CD4-positive, alpha-beta T cell (primary cell): ENCODE measurements at regions of chr3 and their contacts with region 1.

Region 1: GRCh38 chr3:51995346-51996163 is at the start of gene RPL29:
- DNase-seq: peak; percentile 87 to 97 (median 91)
- ATAC-seq: peak; percentile 98
- H3K4me3 ChIP-seq: peak within 1 kb of the TSS; percentile 88
- H3K4me3 Mint-ChIP-seq: peak within 1 kb of the TSS; percentile 99
- H3K27ac ChIP-seq: peak within 1 kb of the TSS; percentile 88 to 95
- H3K27ac Mint-ChIP-seq: peak within 1 kb of the TSS; percentile 97
- H3K4me1 ChIP-seq: peaks cover 40% of the 10 kb centered on the region
- H3K4me1 Mint-ChIP-seq: peaks cover 31% of the 10 kb centered on the region
- H3K27me3 ChIP-seq: no peaks in the 10 kb centered on the region
- H3K27me3 Mint-ChIP-seq: no peaks in the 10 kb centered on the region
- CTCF ChIP-seq: no peak
- total RNA-seq, gene RPL29: 1,843 to 1,901 TPM

Region 2: GRCh38 chr3:51974963-51975851 is 20.3 kb before region 1 on chr3 and contains the start of gene ABHD14A:
- CTCF ChIA-PET with region 1: interaction called, 22 read pairs
- POLR2A ChIA-PET with region 1: interaction called, 28 read pairs
- intact Hi-C with region 1: loop called in 1 of 2 experiments (anchors 1 kb)
- DNase-seq: peak; percentile 48 to 92 (median 67)
- ATAC-seq: peak; percentile 67
- H3K4me3 ChIP-seq: peak within 1 kb of the TSS; percentile 63
- H3K4me3 Mint-ChIP-seq: peak within 1 kb of the TSS; percentile 97
- H3K27ac ChIP-seq: peak within 1 kb of the TSS; percentile 57 to 79
- H3K27ac Mint-ChIP-seq: peak within 1 kb of the TSS; percentile 92
- H3K4me1 ChIP-seq: peaks cover 61% of the 10 kb centered on the region
- H3K4me1 Mint-ChIP-seq: peaks cover 44% of the 10 kb centered on the region
- H3K27me3 ChIP-seq: no peaks in the 10 kb centered on the region
- H3K27me3 Mint-ChIP-seq: no peaks in the 10 kb centered on the region
- CTCF ChIP-seq: no peak
- total RNA-seq, gene ABHD14A: 9.5 to 10.6 TPM

Region 3: GRCh38 chr3:51982782-51983577 is 12.6 kb before region 1 on chr3 and contains the start of gene ACY1:
- CTCF ChIA-PET with region 1: interaction called, 13 read pairs
- POLR2A ChIA-PET with region 1: interaction called, 32 read pairs
- intact Hi-C with region 1: no loop called
- DNase-seq: peak in 13 of 14 experiments; percentile 36 to 85 (median 56)
- ATAC-seq: peak; percentile 85
- H3K4me3 ChIP-seq: peak within 1 kb of the TSS; percentile 75
- H3K4me3 Mint-ChIP-seq: peak within 1 kb of the TSS; percentile 93
- H3K27ac ChIP-seq: peak within 1 kb of the TSS; percentile 69 to 85
- H3K27ac Mint-ChIP-seq: peak within 1 kb of the TSS; percentile 81
- H3K4me1 ChIP-seq: peaks cover 42% of the 10 kb centered on the region
- H3K4me1 Mint-ChIP-seq: peaks cover 20% of the 10 kb centered on the region
- H3K27me3 ChIP-seq: no peaks in the 10 kb centered on the region
- H3K27me3 Mint-ChIP-seq: no peaks in the 10 kb centered on the region
- CTCF ChIP-seq: peak; percentile 3
- total RNA-seq, gene ACY1: 4.9 TPM

Region 4: DNA sequence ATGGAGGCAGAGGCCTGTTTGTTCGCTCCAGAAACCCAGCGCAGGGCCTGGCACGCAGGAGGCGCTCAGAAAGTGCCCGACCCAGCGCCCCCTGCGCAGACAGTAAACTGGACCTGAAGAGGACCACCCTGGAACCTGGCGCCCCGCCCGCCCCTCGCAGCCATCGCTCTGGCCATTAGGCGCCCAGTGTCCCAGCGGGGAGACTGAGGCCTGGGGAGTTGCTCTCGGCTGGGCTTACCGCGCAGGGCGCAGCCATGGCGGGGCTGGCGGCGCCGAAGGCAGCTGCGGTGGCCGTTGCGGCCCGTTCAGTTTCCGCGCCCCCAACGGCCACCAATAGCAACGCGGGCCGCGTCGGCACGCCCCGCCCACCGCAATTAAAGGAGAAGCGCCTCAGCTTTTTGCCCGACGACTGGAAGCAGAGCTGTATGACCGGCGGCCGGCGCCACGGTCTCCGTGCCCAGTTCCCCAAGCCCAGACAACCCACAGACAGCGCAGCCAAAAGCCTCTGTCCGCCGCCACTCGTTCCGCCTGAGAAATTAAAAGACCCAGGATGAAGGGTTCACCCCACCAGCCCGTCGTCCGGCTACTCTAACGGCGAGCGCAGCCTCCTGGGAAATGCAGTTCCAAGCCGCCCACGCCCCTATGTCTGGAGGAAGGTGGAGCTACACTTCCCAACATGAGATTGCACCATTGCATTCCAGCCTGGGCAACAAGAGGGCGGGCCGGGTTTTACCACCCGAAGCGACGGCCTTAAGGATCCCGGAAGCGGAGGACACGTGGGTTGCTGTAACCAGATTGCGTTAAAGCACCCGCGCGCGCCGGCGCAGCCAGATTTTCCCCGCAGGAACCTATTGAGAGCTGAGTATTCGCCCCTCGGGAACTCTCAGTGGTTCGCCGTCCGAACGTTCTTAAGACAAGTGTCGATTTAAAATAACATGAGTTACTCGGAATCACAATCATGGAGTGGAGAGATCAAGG is 158.9 kb after region 1 on chr3 and contains the start of gene POC1A:
- CTCF ChIA-PET with region 1: no interaction called
- POLR2A ChIA-PET with region 1: interaction called, 13 read pairs
- intact Hi-C with region 1: no loop called
- DNase-seq: peak; percentile 66 to 94 (median 78)
- ATAC-seq: peak; percentile 87
- H3K4me3 ChIP-seq: peak within 1 kb of the TSS; percentile 87
- H3K4me3 Mint-ChIP-seq: peak within 1 kb of the TSS; percentile 99
- H3K27ac ChIP-seq: peak within 1 kb of the TSS; percentile 73 to 74
- H3K27ac Mint-ChIP-seq: peak within 1 kb of the TSS; percentile 96
- H3K4me1 ChIP-seq: peaks cover 17% of the 10 kb centered on the region
- H3K4me1 Mint-ChIP-seq: peaks cover 12% of the 10 kb centered on the region
- H3K27me3 ChIP-seq: no peaks in the 10 kb centered on the region
- H3K27me3 Mint-ChIP-seq: no peaks in the 10 kb centered on the region
- CTCF ChIP-seq: peak; percentile 9
- total RNA-seq, gene POC1A: 0.22 to 0.39 TPM

Region 5: GRCh38 chr3:52406231-52406661 is 410.7 kb after region 1 on chr3:
- CTCF ChIA-PET with region 1: no interaction called
- POLR2A ChIA-PET with region 1: no interaction called
- intact Hi-C with region 1: loop called in 1 of 2 experiments (anchors 5 kb)
- DNase-seq: peak in 2 of 14 experiments; percentile 1 to 7
- ATAC-seq: no peak
- H3K4me3 ChIP-seq: no peak overlapping the region
- H3K4me3 Mint-ChIP-seq: peak overlapping the region; percentile 38
- H3K27ac ChIP-seq: no peak overlapping the region
- H3K27ac Mint-ChIP-seq: no peak overlapping the region
- H3K4me1 ChIP-seq: peaks cover 39% of the 10 kb centered on the region
- H3K4me1 Mint-ChIP-seq: peaks cover 22% of the 10 kb centered on the region
- H3K27me3 ChIP-seq: no peaks in the 10 kb centered on the region
- H3K27me3 Mint-ChIP-seq: no peaks in the 10 kb centered on the region
- CTCF ChIP-seq: no peak

Region 6: GRCh38 chr3:52705688-52706686 is 710.4 kb after region 1 on chr3 and contains the starts of genes GLT8D1 and SPCS1:
- CTCF ChIA-PET with region 1: no interaction called
- POLR2A ChIA-PET with region 1: no interaction called
- intact Hi-C with region 1: loop called in 1 of 2 experiments (anchors 10 kb)
- DNase-seq: peak; percentile 70 to 94 (median 82)
- ATAC-seq: peak; percentile 89
- H3K4me3 ChIP-seq: peak within 1 kb of the TSS; percentile 98
- H3K4me3 Mint-ChIP-seq: peak within 1 kb of the TSS; percentile 96
- H3K27ac ChIP-seq: peak within 1 kb of the TSS; percentile 86 to 90
- H3K27ac Mint-ChIP-seq: peak within 1 kb of the TSS; percentile 98
- H3K4me1 ChIP-seq: peaks cover 39% of the 10 kb centered on the region
- H3K4me1 Mint-ChIP-seq: peaks cover 40% of the 10 kb centered on the region
- H3K27me3 ChIP-seq: no peaks in the 10 kb centered on the region
- H3K27me3 Mint-ChIP-seq: no peaks in the 10 kb centered on the region
- CTCF ChIP-seq: no peak
- total RNA-seq, gene GLT8D1: 8.4 to 10.8 TPM
- total RNA-seq, gene SPCS1: 60.0 to 64.5 TPM